Activated CD4-positive, alpha-beta memory T cell treated with anti-CD3 and anti-CD28 coated beads, Interleukin-2, amount 10 ng/mL, durations not matched to agents 7 days and 5 days (primary cell): ENCODE measurements at regions of chr12 and their contacts with region 1.

Region 1: DNA sequence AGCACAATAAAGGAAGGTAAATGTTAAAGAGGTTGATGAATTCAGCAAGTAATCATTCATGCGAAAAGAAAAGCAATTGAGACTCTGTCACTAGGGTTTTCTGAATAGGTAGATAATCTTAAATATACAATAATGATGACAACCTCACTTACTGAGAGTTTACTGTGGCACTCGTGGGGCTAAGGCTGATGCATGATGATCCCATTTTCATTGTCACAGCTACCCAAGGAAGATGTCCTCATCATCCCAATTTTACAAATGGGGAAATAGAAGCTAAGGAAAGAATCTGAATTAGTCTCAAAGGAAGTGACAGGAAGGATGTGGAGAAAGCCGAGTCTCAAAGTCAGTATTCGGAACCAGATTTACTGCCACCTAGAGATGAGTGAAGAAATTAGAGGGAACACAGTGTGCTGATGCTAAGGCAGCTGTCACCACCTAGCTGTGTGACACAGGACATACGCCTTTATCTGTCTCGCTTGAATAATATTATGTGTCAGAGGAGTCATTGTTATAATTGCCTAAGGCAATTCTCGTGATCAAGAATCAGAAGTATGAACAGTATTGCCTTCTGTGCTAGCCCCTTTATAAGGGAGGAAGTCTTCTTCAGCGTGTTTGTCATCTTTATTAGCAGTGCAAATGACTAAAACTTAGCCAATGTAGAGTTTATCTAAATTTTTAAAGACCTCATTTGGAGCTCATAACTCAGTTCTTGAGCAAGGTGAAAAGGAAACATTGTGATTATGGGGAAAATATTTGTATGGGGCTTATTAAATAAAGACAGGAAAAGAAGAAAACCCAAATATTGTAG is 63.2 kb downstream of the ERGIC2 start:
- DNase-seq: peak; percentile 56
- H3K4me3 Mint-ChIP-seq: no peak overlapping the region
- H3K27ac Mint-ChIP-seq: no peak overlapping the region
- H3K4me1 Mint-ChIP-seq: peaks cover 11% of the 10 kb centered on the region
- H3K27me3 Mint-ChIP-seq: no peaks in the 10 kb centered on the region

Region 2: GRCh38 chr12:29073628-29074239 is 244.0 kb before region 1 on chr12:
- CTCF ChIA-PET with region 1: interaction called, 27 read pairs
- POLR2A ChIA-PET with region 1: no interaction called
- DNase-seq: no peak
- H3K4me3 Mint-ChIP-seq: no peak overlapping the region
- H3K27ac Mint-ChIP-seq: no peak overlapping the region
- H3K4me1 Mint-ChIP-seq: no peaks in the 10 kb centered on the region
- H3K27me3 Mint-ChIP-seq: peaks cover 21% of the 10 kb centered on the region

Region 3: DNA sequence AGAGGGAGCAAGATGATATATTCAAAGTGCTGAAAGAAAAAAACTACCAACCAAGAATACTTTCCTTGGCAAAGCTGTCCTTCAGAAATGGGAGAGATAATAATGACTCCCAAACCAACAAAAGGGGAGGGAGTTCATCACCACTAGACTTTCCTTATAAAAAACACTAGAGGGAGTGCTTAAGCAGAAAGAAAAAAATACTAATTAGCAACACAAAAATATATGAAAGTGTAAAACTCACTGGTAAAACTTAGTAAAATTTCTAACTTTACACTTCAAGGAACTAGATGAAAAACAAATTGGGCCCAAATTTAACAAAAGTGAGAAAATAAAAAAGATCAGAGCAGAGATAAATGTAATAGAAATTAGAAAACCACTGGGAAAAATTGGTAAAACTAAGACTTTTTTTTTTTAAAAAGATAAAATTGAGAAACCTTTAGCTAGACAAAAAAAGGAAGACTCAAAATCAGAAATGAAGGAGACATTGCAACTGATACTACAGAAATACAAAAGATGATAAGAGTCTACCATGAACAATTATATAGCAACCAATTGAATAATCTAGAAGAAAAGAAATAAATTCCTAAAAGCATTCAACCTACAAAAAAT is 229.0 kb before region 1 on chr12:
- CTCF ChIA-PET with region 1: interaction called, 29 read pairs
- POLR2A ChIA-PET with region 1: no interaction called
- DNase-seq: no peak
- H3K4me3 Mint-ChIP-seq: no peak overlapping the region
- H3K27ac Mint-ChIP-seq: no peak overlapping the region
- H3K4me1 Mint-ChIP-seq: no peaks in the 10 kb centered on the region
- H3K27me3 Mint-ChIP-seq: peaks cover 31% of the 10 kb centered on the region

Region 4: DNA sequence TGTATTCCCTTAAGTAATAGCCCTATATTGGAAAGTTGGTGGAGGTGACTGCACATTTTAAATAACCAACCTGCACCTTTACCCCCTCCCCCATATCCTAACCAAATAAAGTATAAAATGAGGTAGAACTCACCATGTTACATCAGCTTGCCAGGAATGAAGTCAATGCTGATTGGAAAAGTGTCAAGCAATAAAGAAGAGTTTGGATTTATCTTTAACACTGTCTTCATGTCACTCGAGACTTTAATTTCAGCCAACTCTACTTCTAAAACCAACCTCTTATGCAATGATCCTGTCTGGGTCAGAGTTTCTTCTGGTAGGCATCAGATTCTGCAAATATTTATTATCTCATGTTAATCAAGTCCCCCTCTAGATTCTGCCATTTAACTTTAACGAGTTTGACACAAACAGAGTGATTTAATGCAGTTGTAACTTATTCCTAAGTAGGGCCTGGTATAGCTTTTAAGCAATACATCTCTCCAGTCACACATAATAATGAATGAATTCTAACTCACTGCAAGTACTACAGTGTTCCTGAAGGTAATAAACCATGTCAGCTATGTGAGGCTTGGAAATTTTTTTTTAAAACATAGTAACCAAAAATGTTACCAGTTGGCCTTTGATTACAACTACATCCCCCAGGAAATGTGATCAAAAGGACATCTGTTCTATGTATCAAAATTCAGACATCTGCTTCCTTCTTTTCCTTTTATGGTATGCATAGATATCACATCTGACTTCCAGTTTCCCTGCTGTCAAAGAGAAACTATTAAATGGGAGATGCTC is 35.5 kb before region 1 on chr12:
- CTCF ChIA-PET with region 1: no interaction called
- POLR2A ChIA-PET with region 1: no interaction called
- DNase-seq: no peak
- H3K4me3 Mint-ChIP-seq: no peak overlapping the region
- H3K27ac Mint-ChIP-seq: no peak overlapping the region
- H3K4me1 Mint-ChIP-seq: no peaks in the 10 kb centered on the region
- H3K27me3 Mint-ChIP-seq: no peaks in the 10 kb centered on the region